Sigmoid colon (tissue), 7 donors: ENCODE measurements at regions of chr11 and their contacts with region 1.

Region 1: DNA sequence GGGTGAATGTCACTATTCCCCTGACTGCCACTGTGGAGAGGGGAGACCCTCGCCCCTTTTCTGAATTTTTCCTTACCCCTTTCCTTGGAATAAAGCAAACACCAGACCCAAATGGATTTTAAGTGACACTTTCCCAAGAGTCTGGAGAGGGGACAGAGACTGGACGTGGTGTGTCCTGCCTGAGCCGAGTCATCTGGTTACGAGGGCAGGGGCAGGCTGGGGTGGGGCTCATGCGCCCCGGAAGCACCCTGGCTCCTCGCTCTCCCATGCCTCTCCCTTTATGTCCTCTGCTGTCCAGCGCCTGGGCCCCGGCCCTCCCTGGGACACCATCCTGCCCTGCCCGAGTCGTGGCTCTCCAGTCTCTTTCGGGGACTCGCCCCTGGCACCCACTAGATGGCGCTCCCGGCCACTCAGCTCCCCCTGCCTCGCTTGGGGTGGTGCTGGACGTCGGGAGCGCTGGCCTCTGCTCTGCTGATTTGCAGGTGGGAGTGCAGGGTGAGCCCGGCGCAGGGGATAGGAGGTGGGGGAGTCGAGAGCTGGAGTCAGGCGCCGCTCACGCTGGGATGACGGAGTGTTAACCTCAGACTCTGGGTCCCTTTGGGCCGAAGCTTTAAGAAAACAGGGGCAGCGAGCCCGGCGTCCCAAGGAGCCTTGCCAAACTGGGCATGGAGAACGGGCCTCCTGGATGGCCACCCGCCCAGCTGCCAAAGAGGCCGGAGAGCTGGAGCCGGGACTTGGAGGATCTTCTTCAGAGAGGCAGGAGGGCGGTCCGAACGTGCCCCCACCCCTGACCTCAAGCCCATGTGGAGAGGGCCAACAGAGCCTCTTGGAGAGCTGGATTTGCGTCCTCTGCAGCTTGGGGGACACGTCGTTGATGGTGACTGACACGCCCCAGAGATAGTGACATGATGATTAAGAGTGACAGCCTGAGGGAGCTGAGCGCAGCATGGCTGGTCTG is 89.9 kb downstream of the RPS6KA4 start:
- DNase-seq: peak; percentile 90
- H3K4me3 ChIP-seq: peak overlapping the region; percentile 16 to 42 (median 33)
- H3K27ac ChIP-seq: peak overlapping the region in 3 of 4 donors; percentile 5 to 39 (median 20)
- H3K4me1 ChIP-seq: peaks cover 0 to 25% (median 14%) of the 10 kb centered on the region in 4 donors
- H3K27me3 ChIP-seq: peaks cover 0 to 3% (median 0%) of the 10 kb centered on the region in 3 donors
- CTCF ChIP-seq: peak; percentile 54 to 76 (median 70)
- EP300 ChIP-seq: no peak
- POLR2A ChIP-seq: no peak

Region 2: DNA sequence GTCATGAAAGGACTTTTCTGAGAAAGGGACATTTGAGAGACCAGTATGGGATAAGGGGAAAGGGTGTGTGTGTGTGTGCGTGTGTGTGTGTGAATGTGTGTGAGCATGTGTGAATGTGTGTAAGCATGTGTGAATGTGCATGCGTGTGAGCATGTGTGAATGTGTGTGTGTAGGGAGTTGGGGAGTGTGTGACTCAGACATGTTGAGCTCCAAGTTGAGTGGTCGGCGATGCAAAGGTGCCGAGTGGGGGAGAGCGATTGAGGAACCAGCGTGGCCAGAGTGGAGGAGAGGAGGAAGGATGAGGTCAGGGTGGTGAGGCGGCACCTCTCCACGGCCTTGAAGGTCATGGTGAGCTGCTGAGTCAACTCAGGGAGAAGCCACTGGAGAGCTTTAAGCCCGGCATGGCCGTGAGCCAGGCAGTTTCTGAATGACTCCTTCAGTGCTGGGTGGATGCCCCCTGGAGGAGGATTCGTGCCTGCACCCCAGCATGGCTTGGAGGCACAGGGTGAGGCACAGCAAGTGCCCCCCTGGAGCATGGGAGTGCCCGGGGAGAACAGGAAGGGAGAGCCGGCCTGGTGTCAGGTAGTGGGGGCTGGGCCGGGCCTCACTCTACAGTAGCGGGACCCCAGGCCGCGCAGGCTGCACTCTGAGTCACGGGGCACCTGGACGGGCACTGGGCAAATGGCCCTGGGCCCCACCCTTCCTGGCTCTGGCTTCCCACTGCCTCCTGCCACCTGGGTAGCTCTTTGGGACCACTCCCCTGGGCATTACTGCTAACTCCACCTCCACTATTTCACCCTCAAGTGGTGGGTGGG is 117.1 kb before region 1 on chr11:
- intact Hi-C with region 1: no loop called
- DNase-seq: peak; percentile 76
- H3K4me3 ChIP-seq: no peak overlapping the region
- H3K27ac ChIP-seq: no peak overlapping the region
- H3K4me1 ChIP-seq: peaks cover 0 to 9% (median 3%) of the 10 kb centered on the region in 4 donors
- H3K27me3 ChIP-seq: no peaks in the 10 kb centered on the region
- CTCF ChIP-seq: peak in 1 of 4 experiments; percentile 8
- EP300 ChIP-seq: no peak
- POLR2A ChIP-seq: no peak

Region 3: GRCh38 chr11:64652586-64653387 is 203.9 kb after region 1 on chr11:
- intact Hi-C with region 1: loop called (anchors 2 kb)
- DNase-seq: peak; percentile 91
- H3K4me3 ChIP-seq: no peak overlapping the region
- H3K27ac ChIP-seq: peak overlapping the region in 3 of 4 donors; percentile 26 to 50 (median 48)
- H3K4me1 ChIP-seq: peaks cover 0 to 15% (median 6%) of the 10 kb centered on the region in 4 donors
- H3K27me3 ChIP-seq: no peaks in the 10 kb centered on the region
- CTCF ChIP-seq: peak; percentile 93 to 98 (median 96)
- EP300 ChIP-seq: no peak
- POLR2A ChIP-seq: no peak